ENCODE measurements at regions of chr3 and their contacts with region 1.

Region 1: DNA sequence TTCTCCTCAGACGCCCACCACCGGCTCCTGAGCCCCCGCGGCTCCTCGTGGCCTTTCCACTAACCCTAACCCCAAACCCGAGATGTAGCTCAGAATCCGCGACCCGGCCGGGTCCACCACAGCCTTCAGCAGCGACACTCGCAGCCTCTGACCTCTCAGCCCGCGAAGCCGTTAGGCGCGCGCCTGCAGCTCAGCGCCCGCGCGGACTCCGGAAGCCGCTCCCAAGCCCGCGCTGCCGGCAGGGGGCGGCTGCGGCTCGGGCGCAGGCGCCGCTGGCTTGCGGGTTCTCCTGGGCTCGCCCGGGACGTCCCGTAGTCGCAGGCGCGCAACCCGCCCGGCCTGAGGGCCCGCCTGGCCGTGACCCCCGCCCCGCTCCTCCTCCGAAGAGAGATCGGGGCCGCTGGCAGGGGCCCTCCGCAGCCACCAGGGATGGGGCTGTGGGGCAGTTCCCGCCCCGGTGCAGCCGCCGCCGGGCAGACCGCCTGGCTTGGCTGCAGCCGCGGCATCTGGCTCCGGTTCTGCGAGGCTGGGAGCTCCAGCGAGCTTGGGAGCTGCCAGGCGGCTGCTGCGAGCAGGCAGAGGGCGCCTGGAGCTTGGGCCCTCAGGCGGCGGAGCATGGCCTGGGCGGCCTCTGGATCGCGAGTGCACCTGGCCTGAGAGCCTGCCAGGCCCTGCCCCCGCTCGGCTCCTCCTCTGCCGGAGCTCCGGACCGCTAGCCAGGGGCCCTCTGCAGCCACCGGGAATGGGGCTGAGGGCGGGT is 120.7 kb downstream of the LMLN start:
- DNase-seq: peak; percentile 58
- H3K4me3 ChIP-seq: peak overlapping the region in 2 of 3 experiments; percentile 16 to 20
- H3K27ac ChIP-seq: no peak overlapping the region
- H3K4me1 ChIP-seq: peaks cover 4% of the 10 kb centered on the region
- H3K27me3 ChIP-seq: peaks cover 29 to 73% of the 10 kb centered on the region in 2 experiments
- CTCF ChIP-seq: peak; percentile 63 to 65
- POLR2A ChIP-seq: no peak

Region 2: GRCh38 chr3:197906023-197906849 is 174.5 kb before region 1 on chr3:
- CTCF ChIA-PET with region 1: interaction called, 3 read pairs
- POLR2A ChIA-PET with region 1: no interaction called
- dilution Hi-C with region 1: no loop called
- intact Hi-C with region 1: loop called (anchors 2 kb)
- DNase-seq: peak; percentile 88
- H3K4me3 ChIP-seq: no peak overlapping the region
- H3K27ac ChIP-seq: no peak overlapping the region
- H3K4me1 ChIP-seq: no peaks in the 10 kb centered on the region
- H3K27me3 ChIP-seq: no peaks in the 10 kb centered on the region
- CTCF ChIP-seq: peak; percentile 87 to 89
- POLR2A ChIP-seq: no peak

Region 3: GRCh38 chr3:197959898-197960693 is 120.6 kb before region 1 on chr3 and contains the start of gene LMLN:
- CTCF ChIA-PET with region 1: interaction called, 3 read pairs
- POLR2A ChIA-PET with region 1: no interaction called
- dilution Hi-C with region 1: no loop called
- intact Hi-C with region 1: loop called (anchors 5 kb)
- DNase-seq: peak; percentile 97
- H3K4me3 ChIP-seq: peak within 1 kb of the TSS; percentile 30 to 75 (median 68)
- H3K27ac ChIP-seq: no peak within 1 kb of the TSS
- H3K4me1 ChIP-seq: peaks cover 15% of the 10 kb centered on the region
- H3K27me3 ChIP-seq: no peaks in the 10 kb centered on the region
- CTCF ChIP-seq: no peak
- POLR2A ChIP-seq: peak; percentile 77
- total RNA-seq, gene LMLN: 6.5 and 9.0 TPM in 2 replicates

Region 4: GRCh38 chr3:198051836-198052235 is 28.9 kb before region 1 on chr3:
- CTCF ChIA-PET with region 1: interaction called, 13 read pairs
- POLR2A ChIA-PET with region 1: no interaction called
- dilution Hi-C with region 1: no loop called
- intact Hi-C with region 1: no loop called
- DNase-seq: no peak
- H3K4me3 ChIP-seq: no peak overlapping the region
- H3K27ac ChIP-seq: no peak overlapping the region
- H3K4me1 ChIP-seq: no peaks in the 10 kb centered on the region
- H3K27me3 ChIP-seq: no peaks in the 10 kb centered on the region
- CTCF ChIP-seq: no peak
- POLR2A ChIP-seq: no peak

Region 5: DNA sequence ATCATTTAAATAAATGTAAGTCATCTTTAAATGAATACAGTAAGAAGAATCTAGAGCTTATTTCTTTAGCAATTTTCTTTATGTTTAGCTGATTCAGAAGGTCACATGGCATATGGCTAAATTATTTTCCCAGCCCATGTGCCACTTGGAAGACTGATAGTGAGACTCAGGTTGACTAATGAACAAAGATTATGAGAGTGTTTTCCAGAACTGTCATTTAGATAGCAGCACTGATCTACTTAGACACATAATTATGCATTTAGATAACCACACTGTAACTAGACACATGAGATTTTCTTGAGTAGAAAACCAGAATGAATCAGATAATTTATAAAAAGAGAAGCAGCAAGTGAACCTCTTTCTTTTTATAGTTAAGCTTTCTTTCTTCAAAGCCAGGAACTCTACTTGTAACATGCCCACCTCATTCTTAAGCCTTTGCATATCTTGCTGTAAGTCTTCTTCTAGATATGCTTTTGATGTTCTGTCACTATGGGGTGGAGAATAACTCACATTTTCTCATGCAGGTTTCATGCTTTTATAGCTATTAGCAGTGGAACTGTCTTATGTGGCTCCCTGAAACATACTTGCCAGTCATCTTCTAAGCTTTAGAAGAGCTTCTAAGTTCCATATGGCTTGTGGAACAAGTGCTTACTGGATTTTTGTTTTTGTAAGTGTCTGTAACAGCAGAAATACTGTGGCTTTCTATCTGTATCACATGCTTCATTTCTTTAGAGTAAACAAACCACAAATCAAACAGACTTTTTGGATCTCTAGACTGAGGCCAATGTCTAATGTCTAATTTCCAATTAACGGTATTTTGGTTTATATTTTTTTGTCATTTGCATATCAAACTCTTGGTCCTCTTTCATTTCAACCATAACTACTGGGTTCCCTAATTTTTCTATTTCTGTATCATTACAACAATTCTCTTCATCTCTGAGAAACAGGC is 19.3 kb before region 1 on chr3:
- CTCF ChIA-PET with region 1: interaction called, 13 read pairs
- POLR2A ChIA-PET with region 1: no interaction called
- dilution Hi-C with region 1: no loop called
- intact Hi-C with region 1: no loop called
- DNase-seq: no peak
- H3K4me3 ChIP-seq: no peak overlapping the region
- H3K27ac ChIP-seq: no peak overlapping the region
- H3K4me1 ChIP-seq: no peaks in the 10 kb centered on the region
- H3K27me3 ChIP-seq: peaks cover 10 to 27% of the 10 kb centered on the region in 2 experiments
- CTCF ChIP-seq: no peak
- POLR2A ChIP-seq: no peak

Region 6: DNA sequence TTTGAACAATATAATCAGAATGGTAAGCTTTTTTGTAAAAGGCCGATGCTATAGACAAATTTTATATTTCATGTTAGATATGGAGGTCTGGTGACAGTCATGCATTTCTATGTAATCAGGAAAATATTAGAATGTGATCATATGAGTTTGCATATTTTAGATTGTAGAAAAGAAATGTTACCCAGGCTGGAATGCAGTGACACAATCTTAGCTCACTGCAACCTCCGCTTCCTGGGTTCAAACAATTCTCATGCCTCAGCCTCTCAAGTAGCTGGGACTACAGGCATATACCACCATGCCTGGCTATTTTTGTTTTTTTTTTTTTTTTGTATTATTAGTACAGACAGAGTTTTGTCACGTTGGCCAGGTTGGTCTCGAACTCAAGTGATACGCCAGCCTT is 31.3 kb after region 1 on chr3:
- CTCF ChIA-PET with region 1: interaction called, 14 read pairs
- POLR2A ChIA-PET with region 1: no interaction called
- dilution Hi-C with region 1: no loop called
- intact Hi-C with region 1: no loop called
- DNase-seq: no peak
- H3K4me3 ChIP-seq: no peak overlapping the region
- H3K27ac ChIP-seq: no peak overlapping the region
- H3K4me1 ChIP-seq: no peaks in the 10 kb centered on the region
- H3K27me3 ChIP-seq: peaks cover 27 to 36% of the 10 kb centered on the region in 2 experiments
- CTCF ChIP-seq: no peak
- POLR2A ChIP-seq: no peak

Measured in endothelial cell of umbilical vein (primary cell).